Head of caudate nucleus (tissue), 42 donors: ENCODE measurements at regions of chr3 and their contacts with region 1.

Region 1: DNA sequence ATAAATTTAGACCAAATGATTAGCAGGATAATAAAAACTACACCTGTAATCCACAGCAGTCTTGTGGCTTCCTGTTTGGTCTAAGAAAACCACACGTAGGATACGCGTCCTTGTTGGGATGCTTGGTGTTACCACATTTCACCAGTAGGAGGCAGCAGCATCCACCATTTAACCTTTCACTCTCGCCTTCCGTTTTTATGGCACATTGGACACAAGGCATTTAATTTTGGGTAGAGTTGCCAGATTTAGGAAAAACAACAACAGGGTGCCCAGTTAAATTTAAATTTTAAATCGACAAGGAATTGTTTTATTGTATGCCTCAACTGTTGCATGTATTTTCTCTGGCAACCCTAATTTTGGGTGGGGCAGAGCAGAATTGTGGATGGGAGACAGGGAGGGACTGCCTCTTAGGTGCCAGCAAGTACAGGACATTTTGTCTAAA is 6.3 kb downstream of the LRRC31 start:
- DNase-seq: peak in 41 of 42 donors; percentile 20 to 89 (median 71)

Region 2: GRCh38 chr3:169966428-169966950 is 103.0 kb after region 1 on chr3 and contains the start of gene SEC62:
- intact Hi-C with region 1: loop called (anchors 5 kb)
- DNase-seq: peak; percentile 87 to 98 (median 95)

Region 3: GRCh38 chr3:170180908-170181879 is 317.7 kb after region 1 on chr3 and contains the start of gene PHC3:
- intact Hi-C with region 1: loop called (anchors 10 kb)
- DNase-seq: peak; percentile 84 to 98 (median 95)